H1 (cell line): ENCODE measurements at regions of chr5 and their contacts with region 1.

Region 1: DNA sequence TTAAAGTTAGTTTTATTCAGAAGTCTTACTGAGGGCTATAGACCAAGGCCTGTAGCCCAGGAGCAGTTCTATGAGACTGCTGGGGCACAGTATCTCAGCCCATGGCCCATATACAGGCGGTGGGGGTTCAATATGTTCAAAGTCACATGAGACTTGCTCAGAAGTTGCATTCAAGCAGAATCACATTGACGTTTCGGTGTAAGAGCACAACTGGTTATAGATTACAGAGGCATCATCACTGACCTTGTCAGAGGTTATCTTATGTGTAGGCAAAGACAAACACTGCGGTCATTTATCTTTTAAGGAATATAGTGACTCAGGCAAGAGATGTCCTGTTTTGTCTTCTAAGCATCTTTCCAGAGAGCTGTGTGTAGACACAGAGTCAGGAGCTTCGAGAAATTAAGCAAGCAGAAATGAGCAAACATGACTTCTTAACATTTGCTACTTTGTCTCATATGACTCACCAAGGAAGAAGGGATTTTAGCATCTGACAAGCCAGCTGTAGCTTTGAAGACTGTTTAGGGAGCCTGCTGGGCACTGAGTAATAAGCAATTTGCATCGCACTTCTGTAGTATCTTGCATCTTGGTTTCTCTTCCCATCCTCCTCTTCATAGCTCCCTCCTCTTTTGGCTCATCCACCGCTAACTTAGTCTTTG is 12.9 kb upstream of the F2RL1 start:
- DNase-seq: no peak
- H3K4me3 ChIP-seq: peak overlapping the region in 3 of 4 experiments; percentile 9 to 34 (median 32); a peak in 3 of 8 replicates
- H3K27ac ChIP-seq: no peak overlapping the region
- H3K4me1 ChIP-seq: peaks cover 8 to 22% (median 17%) of the 10 kb centered on the region in 4 experiments; a peak in 6 of 7 replicates
- H3K27me3 ChIP-seq: no peaks in the 10 kb centered on the region; a peak in 1 of 7 replicates
- CTCF ChIP-seq: no peak
- EP300 ChIP-seq: no peak
- POLR2A ChIP-seq: no peak
- RAD21 ChIP-seq: no peak

Region 2: GRCh38 chr5:76782444-76782843 is 23.5 kb before region 1 on chr5:
- CTCF ChIA-PET with region 1: interaction called, 6 read pairs
- POLR2A ChIA-PET with region 1: interaction called, 35 read pairs
- DNase-seq: no peak
- H3K4me3 ChIP-seq: no peak overlapping the region
- H3K27ac ChIP-seq: no peak overlapping the region
- H3K4me1 ChIP-seq: peaks cover 1 to 8% (median 3%) of the 10 kb centered on the region in 4 experiments; a peak in 4 of 7 replicates
- H3K27me3 ChIP-seq: no peaks in the 10 kb centered on the region
- CTCF ChIP-seq: no peak
- EP300 ChIP-seq: no peak
- POLR2A ChIP-seq: no peak
- RAD21 ChIP-seq: no peak

Region 3: DNA sequence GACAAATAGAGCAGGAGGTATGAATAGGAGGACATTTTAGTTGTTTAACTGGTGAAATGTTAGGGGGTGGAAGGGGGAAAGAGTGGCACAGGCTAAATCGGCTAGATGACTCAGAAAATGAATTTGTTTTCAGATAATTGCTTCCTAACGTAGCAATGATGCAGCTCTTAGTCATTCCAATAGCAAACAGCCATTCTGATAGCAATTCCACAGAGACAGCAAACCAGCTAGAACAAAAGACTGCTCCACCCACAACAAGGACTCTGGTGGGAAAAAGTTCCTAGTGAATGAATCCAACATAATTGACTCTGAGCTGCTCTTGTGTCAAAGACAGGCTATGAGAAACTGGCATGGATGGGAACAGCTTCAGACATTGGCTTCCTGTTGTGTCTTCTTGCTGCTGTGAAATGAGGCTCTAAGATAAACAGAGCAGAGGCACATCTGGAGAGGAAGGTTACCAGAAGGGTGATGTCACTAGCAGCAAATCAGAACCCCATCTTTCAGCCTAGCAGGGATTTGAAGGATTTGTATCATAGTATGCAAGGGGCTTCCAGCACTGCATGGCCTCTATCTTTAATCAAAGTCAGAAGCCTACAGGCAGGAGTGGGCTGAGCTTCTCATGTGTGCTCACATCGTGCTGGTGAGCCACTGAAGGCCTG is 15.2 kb before region 1 on chr5:
- CTCF ChIA-PET with region 1: interaction called, 4 read pairs
- POLR2A ChIA-PET with region 1: interaction called, 35 read pairs
- DNase-seq: no peak
- H3K4me3 ChIP-seq: no peak overlapping the region
- H3K27ac ChIP-seq: no peak overlapping the region
- H3K4me1 ChIP-seq: peaks cover 0 to 5% (median 3%) of the 10 kb centered on the region in 4 experiments; a peak in 4 of 7 replicates
- H3K27me3 ChIP-seq: no peaks in the 10 kb centered on the region
- CTCF ChIP-seq: no peak
- EP300 ChIP-seq: no peak
- POLR2A ChIP-seq: no peak
- RAD21 ChIP-seq: no peak

Region 4: DNA sequence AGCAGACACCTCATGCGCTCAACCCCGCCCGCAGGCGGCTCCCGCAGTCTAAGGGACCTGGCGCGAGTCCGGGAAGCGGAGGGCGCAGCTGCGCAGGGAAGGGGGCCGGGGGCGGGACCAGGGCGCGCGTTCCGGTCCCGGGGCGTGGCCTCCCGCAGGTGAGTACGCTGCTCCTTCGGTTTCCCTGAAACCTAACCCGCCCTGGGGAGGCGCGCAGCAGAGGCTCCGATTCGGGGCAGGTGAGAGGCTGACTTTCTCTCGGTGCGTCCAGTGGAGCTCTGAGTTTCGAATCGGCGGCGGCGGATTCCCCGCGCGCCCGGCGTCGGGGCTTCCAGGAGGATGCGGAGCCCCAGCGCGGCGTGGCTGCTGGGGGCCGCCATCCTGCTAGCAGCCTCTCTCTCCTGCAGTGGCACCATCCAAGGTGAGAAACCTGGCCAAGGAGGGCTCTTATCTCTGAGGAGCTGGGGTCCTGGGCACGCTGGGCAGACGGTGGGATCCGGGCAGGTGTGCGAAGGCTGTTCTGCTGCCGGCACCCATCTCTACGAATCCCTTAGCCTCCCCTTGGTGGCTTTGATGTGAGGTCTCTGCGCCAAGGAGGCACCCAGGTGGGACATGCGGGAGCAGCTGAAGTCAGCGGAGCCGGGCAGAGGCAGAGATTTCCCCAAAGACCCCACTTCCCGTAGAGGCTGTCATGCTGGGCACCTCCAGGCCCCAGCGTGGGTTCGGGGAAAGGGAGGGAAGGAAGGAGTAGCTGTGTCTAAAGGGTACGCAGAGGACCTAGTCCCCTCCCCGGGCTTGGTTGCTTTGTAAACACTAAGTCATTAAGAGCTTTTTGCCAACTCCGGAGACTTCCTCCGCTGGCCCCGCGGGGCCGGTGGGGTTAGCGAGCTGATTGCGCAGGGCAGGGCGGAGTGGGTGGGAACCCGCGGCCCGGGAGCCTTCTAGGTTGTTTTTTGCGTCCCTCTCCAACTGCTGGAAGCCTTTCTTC is 13.2 kb after region 1 on chr5 and contains the start of gene F2RL1:
- CTCF ChIA-PET with region 1: interaction called, 28 read pairs
- POLR2A ChIA-PET with region 1: interaction called, 131 read pairs
- DNase-seq: peak; percentile 88 to 92
- H3K4me3 ChIP-seq: peak within 1 kb of the TSS; percentile 73 to 99 (median 86)
- H3K27ac ChIP-seq: peak within 1 kb of the TSS; percentile 39; the same call in 1 of the 2 replicates
- H3K4me1 ChIP-seq: peaks cover 0 to 16% (median 8%) of the 10 kb centered on the region in 4 experiments; a peak in 5 of 7 replicates
- H3K27me3 ChIP-seq: peaks cover 0 to 5% (median 4%) of the 10 kb centered on the region in 4 experiments; a peak in 2 of 7 replicates
- CTCF ChIP-seq: 0 out of 4 replicates have a peak, but pooled peaks of 1 of the 3 experiments have one; percentile 6
- EP300 ChIP-seq: peak in 1 of 2 experiments; percentile 88; a peak in 1 of 3 replicates
- POLR2A ChIP-seq: peak; percentile 79 to 81
- RAD21 ChIP-seq: peak in 1 of 2 experiments; percentile 32; a peak in 1 of 4 replicates
- total RNA-seq, gene F2RL1: 23.2 and 23.5 TPM in 2 replicates

Region 5: GRCh38 chr5:76831110-76831452 is 25.1 kb after region 1 on chr5:
- CTCF ChIA-PET with region 1: interaction called, 3 read pairs
- POLR2A ChIA-PET with region 1: interaction called, 11 read pairs
- DNase-seq: no peak
- H3K4me3 ChIP-seq: no peak overlapping the region
- H3K27ac ChIP-seq: no peak overlapping the region
- H3K4me1 ChIP-seq: peaks cover 0 to 3% (median 0%) of the 10 kb centered on the region in 4 experiments; a peak in 1 of 7 replicates
- H3K27me3 ChIP-seq: no peaks in the 10 kb centered on the region
- CTCF ChIP-seq: no peak
- EP300 ChIP-seq: peak in 1 of 2 experiments; percentile 32; a peak in 1 of 3 replicates
- POLR2A ChIP-seq: no peak
- RAD21 ChIP-seq: no peak

Region 6: GRCh38 chr5:76867827-76868693 is 62.1 kb after region 1 on chr5:
- CTCF ChIA-PET with region 1: interaction called, 11 read pairs
- POLR2A ChIA-PET with region 1: interaction called, 3 read pairs
- DNase-seq: peak; percentile 47 to 86
- H3K4me3 ChIP-seq: no peak overlapping the region
- H3K27ac ChIP-seq: no peak overlapping the region
- H3K4me1 ChIP-seq: peaks cover 0 to 4% (median 0%) of the 10 kb centered on the region in 4 experiments; a peak in 2 of 7 replicates
- H3K27me3 ChIP-seq: no peaks in the 10 kb centered on the region
- CTCF ChIP-seq: peak in 2 of 3 experiments; percentile 76 to 80; a peak in 3 of 4 replicates
- EP300 ChIP-seq: no peak
- POLR2A ChIP-seq: no peak
- RAD21 ChIP-seq: peak; percentile 97 to 99

Region 7: DNA sequence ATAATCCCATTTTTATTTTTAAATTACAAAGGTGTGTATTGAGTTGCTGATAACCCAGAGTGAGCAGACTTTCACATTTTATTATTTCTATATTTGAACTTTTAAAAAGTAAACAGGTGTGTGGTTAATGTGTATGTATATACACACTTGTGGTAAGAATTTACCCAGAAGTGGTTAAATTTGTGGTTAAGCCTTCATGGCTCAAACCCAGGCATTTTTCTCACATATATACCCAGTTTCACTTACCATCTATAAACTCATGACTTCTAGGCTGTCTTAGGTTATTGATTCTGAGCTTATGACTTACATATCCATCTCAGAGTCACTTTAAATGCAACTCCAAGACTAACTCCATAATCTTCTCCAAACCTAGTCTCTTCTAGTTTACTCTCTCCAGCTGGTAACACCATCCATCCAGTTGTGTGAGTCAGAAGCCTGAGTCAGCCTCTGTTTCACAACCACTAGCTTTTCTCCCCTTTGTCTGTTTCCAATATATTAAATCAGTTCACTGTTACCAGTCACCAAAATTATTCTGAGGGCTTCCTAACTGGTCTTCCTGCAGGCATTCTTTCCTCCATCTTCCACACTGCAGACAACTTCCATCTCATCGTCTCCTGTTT is 261.0 kb after region 1 on chr5:
- CTCF ChIA-PET with region 1: no interaction called
- POLR2A ChIA-PET with region 1: no interaction called
- DNase-seq: no peak
- H3K4me3 ChIP-seq: no peak overlapping the region
- H3K27ac ChIP-seq: no peak overlapping the region
- H3K4me1 ChIP-seq: peaks cover 0 to 4% (median 1%) of the 10 kb centered on the region in 4 experiments; a peak in 3 of 7 replicates
- H3K27me3 ChIP-seq: peaks cover 0 to 1% (median 0%) of the 10 kb centered on the region in 4 experiments; a peak in 1 of 7 replicates
- CTCF ChIP-seq: no peak
- EP300 ChIP-seq: no peak
- POLR2A ChIP-seq: no peak
- RAD21 ChIP-seq: no peak

Region 8: DNA sequence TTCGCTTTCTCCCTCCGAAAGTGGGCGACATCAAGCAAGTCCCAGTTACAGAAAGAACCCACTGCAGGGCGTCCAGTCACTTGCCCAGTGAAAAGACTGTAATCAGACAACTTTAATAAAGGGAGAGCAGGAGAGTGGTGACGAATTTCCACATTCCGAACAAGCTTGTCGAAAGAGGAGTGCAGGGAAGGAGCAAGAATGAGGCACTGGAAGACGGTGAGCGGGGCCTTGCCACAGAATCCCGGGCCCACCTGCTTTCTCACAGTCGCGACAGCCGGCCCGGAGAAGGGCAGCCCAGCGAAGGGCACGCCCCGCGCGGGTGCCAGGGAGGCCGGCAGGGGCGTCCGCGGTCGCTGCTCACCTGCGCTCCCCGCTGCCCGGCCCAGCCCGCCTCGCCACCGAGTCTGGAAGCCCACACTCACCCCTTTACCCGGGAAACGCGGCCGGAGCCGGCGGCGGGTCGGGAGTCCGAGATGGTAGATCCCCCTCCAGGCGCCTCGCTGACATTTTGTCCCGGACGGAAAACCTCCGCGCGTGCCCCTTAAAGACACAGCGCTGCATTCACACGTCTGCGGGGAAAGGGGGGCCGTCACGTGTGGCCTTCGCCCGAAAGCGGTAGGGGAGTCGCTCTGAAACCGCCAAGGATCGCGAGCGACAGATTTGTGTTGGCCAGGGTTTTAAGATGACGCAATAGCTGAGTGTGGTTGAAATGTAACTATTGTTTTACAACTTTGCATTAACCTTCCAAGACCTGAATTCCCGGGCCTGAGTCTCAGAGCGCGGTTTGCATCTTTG is 280.9 kb after region 1 on chr5 and contains the start of gene ZBED3:
- CTCF ChIA-PET with region 1: no interaction called
- POLR2A ChIA-PET with region 1: interaction called, 10 read pairs
- DNase-seq: peak in 1 of 2 experiments; percentile 77
- H3K4me3 ChIP-seq: peak within 1 kb of the TSS; percentile 58 to 87 (median 74)
- H3K27ac ChIP-seq: peak within 1 kb of the TSS; percentile 94
- H3K4me1 ChIP-seq: peaks cover 6 to 10% (median 8%) of the 10 kb centered on the region in 4 experiments; a peak in 6 of 7 replicates
- H3K27me3 ChIP-seq: no peaks in the 10 kb centered on the region
- CTCF ChIP-seq: peak in 2 of 3 experiments; percentile 8 to 36; a peak in 2 of 4 replicates
- EP300 ChIP-seq: no peak; a peak in 1 of 3 replicates
- POLR2A ChIP-seq: peak; percentile 83
- RAD21 ChIP-seq: 0 out of 4 replicates have a peak, but pooled peaks of 1 of the 2 experiments have one; percentile 12
- total RNA-seq, gene ZBED3: 6.6 and 7.9 TPM in 2 replicates